ENCODE measurements at regions of chr18 and their contacts with region 1.

Region 1: GRCh38 chr18:50687491-50688270 is 127.8 kb downstream of the MAPK4 start:
- DNase-seq: no peak
- ATAC-seq: no peak
- H3K4me3 ChIP-seq: no peak overlapping the region
- H3K4me3 Mint-ChIP-seq: no peak overlapping the region
- H3K27ac ChIP-seq: no peak overlapping the region
- H3K27ac Mint-ChIP-seq: no peak overlapping the region
- H3K4me1 ChIP-seq: no peaks in the 10 kb centered on the region
- H3K4me1 Mint-ChIP-seq: no peaks in the 10 kb centered on the region
- H3K27me3 ChIP-seq: peaks cover 0 to 14% of the 10 kb centered on the region in 2 experiments
- H3K27me3 Mint-ChIP-seq: peaks cover 8 to 11% of the 10 kb centered on the region in 2 donors

Region 2: DNA sequence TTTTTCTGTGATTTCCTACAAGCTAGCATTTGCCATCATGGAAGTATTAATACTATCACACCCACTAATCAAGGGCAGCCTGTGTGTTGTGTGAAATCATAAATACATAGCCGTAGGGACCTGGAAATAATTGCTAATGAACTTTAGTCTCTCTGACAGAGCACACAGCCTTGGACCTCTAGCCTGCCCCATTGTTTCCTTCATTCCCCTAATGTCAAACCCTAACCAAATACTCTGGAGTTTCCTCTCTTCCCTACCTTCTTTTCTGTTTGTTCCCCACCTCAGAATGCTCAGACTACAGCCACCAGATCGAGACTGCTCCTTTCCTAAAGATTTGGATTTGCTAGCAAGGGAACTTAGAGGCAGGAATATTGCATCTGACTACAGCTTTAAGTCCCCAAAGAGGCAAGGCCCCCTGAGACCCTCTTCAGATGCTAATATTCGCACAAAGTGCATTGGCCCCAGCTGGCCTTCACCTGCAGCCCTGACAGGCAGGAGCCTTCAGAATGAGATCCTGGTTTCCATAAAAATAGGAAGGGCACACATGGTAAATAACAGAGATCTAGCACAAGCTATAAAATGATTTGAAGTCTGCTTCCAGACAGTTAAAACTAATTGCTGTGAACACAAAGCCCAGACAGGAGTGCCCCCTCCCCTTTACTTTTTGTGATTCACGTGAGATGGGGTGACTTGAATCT is 1373.1 kb after region 1 on chr18:
- CTCF ChIA-PET with region 1: interaction called in 1 of 2 experiments, 12 read pairs
- POLR2A ChIA-PET with region 1: no interaction called
- DNase-seq: no peak
- ATAC-seq: no peak
- H3K4me3 ChIP-seq: no peak overlapping the region
- H3K4me3 Mint-ChIP-seq: no peak overlapping the region
- H3K27ac ChIP-seq: no peak overlapping the region
- H3K27ac Mint-ChIP-seq: no peak overlapping the region
- H3K4me1 ChIP-seq: no peaks in the 10 kb centered on the region
- H3K4me1 Mint-ChIP-seq: no peaks in the 10 kb centered on the region
- H3K27me3 ChIP-seq: no peaks in the 10 kb centered on the region
- H3K27me3 Mint-ChIP-seq: no peaks in the 10 kb centered on the region

Measured in T-cell (primary cell).